Dorsolateral prefrontal cortex (tissue), 120 donors: ENCODE measurements at regions of chr9 and their contacts with region 1.

Region 1: DNA sequence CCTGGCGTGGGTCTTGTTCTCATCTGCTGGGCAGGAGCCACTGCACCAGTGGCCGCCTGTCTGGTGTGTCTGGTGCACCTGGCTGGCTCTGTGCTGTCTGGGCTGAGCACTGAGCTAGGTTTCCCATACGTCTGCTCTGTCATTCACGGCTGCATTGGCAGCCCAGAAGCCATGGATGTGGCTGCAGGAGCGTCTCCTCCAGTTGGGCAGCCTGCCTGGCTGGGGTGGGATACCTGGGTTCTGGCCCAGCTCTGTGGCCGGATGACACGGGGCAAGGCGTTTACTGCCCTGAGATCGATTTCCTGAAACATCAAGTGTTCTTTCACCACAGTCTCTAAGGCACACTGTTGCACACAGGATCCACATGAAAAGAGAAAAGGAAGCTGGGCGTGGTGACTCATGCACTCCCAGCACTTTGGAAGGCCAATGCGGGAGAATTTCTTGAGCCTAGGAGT is 25.5 kb upstream of the SLC25A51 start:
- DNase-seq: no peak
- H3K4me3 ChIP-seq: no peak overlapping the region
- H3K27ac ChIP-seq: peak overlapping the region in 12 of 59 donors; percentile 21 to 78 (median 48)
- H3K27me3 ChIP-seq: no peaks in the 10 kb centered on the region
- CTCF ChIP-seq: no peak

Region 2: GRCh38 chr9:37852222-37852621 is 77.2 kb before region 1 on chr9:
- intact Hi-C with region 1: no loop called
- DNase-seq: no peak
- H3K4me3 ChIP-seq: no peak overlapping the region
- H3K27ac ChIP-seq: no peak overlapping the region
- H3K27me3 ChIP-seq: no peaks in the 10 kb centered on the region
- CTCF ChIP-seq: no peak

Region 3: DNA sequence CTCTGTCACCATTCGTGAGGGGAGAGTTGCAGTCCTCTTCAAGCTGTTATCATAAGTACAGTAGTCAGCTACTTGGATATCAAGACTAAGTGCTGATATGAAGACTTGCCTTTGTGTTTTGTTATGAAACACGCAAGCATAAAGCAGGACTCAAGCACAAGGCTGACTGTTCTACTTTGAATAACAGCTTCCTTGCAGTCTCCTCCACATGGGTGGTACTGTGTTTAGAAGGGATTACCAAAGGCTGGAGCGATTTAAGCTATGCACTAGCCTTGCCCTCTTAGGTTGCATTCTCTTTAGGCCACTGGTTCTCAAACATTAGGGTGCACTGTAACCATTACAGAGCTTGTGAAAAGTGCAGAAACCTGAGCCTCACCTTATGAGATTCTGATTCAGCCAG is 66.9 kb before region 1 on chr9:
- intact Hi-C with region 1: no loop called
- DNase-seq: no peak
- H3K4me3 ChIP-seq: no peak overlapping the region
- H3K27ac ChIP-seq: no peak overlapping the region
- H3K27me3 ChIP-seq: no peaks in the 10 kb centered on the region
- CTCF ChIP-seq: no peak

Region 4: DNA sequence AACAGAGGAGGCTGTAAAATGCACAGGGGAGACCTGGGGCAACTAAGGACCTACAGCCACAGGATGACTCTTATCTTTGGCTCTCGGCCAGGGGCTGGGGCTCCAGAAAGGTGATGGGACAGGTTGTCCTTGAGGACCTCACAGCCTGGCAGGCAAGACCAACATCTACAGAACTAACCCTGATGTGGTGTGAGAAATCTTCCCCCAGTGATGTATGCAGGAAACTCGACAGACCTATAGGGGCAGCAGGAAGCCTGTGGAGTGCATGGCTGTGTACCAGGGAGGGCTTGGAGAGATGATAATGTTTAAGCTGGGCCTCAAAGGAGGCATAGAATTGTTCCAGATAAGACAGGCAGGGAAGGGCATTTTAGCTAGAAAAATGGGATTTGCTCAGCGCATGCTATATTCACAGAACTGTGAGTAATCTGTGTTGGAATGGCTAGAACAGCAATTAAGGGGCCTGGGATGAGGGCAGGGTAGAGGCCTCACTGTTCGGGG is 42.9 kb after region 1 on chr9:
- intact Hi-C with region 1: loop called in 1 of 2 experiments (anchors 5 kb)
- DNase-seq: no peak
- H3K4me3 ChIP-seq: no peak overlapping the region
- H3K27ac ChIP-seq: peak overlapping the region in 11 of 59 donors; percentile 6 to 53 (median 29)
- H3K27me3 ChIP-seq: no peaks in the 10 kb centered on the region
- CTCF ChIP-seq: no peak

Region 5: GRCh38 chr9:38068866-38069629 is 139.6 kb after region 1 on chr9 and contains the start of gene SHB:
- intact Hi-C with region 1: no loop called
- DNase-seq: peak; percentile 53 to 86 (median 72)
- H3K4me3 ChIP-seq: peak within 1 kb of the TSS; percentile 67 to 98 (median 89)
- H3K27ac ChIP-seq: peak within 1 kb of the TSS in 58 of 59 donors; percentile 63 to 99 (median 95)
- H3K27me3 ChIP-seq: peaks cover 0 to 7% (median 0%) of the 10 kb centered on the region in 45 donors
- CTCF ChIP-seq: peak in 44 of 56 donors; percentile 6 to 72 (median 52)
- total RNA-seq, gene SHB: 6.0 to 49.5 (median 17.2) TPM

Region 6: GRCh38 chr9:38432922-38433510 is 503.5 kb after region 1 on chr9:
- intact Hi-C with region 1: no loop called
- DNase-seq: no peak
- H3K4me3 ChIP-seq: no peak overlapping the region
- H3K27ac ChIP-seq: no peak overlapping the region
- H3K27me3 ChIP-seq: peaks cover 0 to 7% (median 0%) of the 10 kb centered on the region in 45 donors
- CTCF ChIP-seq: peak; percentile 41 to 77 (median 66)